ENCODE measurements at regions of chr7 and their contacts with region 1.

Region 1: GRCh38 chr7:45923290-45923689 is 2.2 kb upstream of the IGFBP3 start:
- DNase-seq: peak; percentile 71 to 83 (median 76)
- ATAC-seq: peak in 3 of 4 donors; percentile 52 to 61 (median 59)
- H3K4me3 ChIP-seq: peak overlapping the region in 9 of 12 donors; percentile 13 to 72 (median 59)
- H3K27ac ChIP-seq: peak overlapping the region in 7 of 12 donors; percentile 14 to 75 (median 48)
- H3K4me1 ChIP-seq: peaks cover 0 to 37% (median 22%) of the 10 kb centered on the region in 12 donors
- H3K27me3 ChIP-seq: peaks cover 0 to 49% (median 0%) of the 10 kb centered on the region in 9 donors
- CTCF ChIP-seq: peak; percentile 80 to 98 (median 91)
- POLR2A ChIP-seq: no peak

Region 2: DNA sequence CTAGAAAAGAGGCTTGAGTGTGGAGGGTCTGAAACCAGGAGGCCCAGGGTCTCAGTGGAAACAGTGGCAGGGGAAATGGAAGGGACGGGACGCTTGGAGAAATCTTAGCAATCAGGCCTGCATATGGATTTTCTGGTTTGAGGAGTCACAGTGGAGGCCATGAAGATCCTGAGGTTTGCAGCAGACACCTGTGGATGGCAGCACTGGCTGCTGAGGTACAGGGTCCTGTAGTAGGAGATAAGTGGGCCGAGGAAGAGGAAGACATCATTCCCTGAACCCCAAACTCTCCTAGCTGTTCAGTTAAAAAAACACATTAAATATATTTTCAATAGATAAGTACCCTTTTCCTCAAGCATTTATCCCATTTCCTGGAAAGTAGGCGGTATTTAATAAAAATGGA is 206.5 kb after region 1 on chr7:
- intact Hi-C with region 1: loop called in 1 of 10 experiments (anchors 10 kb)
- DNase-seq: no peak
- ATAC-seq: no peak
- H3K4me3 ChIP-seq: no peak overlapping the region
- H3K27ac ChIP-seq: no peak overlapping the region
- H3K4me1 ChIP-seq: peaks cover 0 to 9% (median 0%) of the 10 kb centered on the region in 12 donors
- H3K27me3 ChIP-seq: no peaks in the 10 kb centered on the region
- CTCF ChIP-seq: peak in 2 of 12 donors; percentile 41 to 46
- POLR2A ChIP-seq: no peak

Region 3: GRCh38 chr7:46603780-46604179 is 680.5 kb after region 1 on chr7:
- intact Hi-C with region 1: loop called in 1 of 10 experiments (anchors 10 kb)
- DNase-seq: peak; percentile 79 to 96 (median 91)
- ATAC-seq: peak; percentile 96 to 97 (median 96)
- H3K4me3 ChIP-seq: peak overlapping the region in 1 of 12 donors; percentile 14
- H3K27ac ChIP-seq: peak overlapping the region; percentile 61 to 89 (median 82)
- H3K4me1 ChIP-seq: peaks cover 3 to 38% (median 24%) of the 10 kb centered on the region in 12 donors
- H3K27me3 ChIP-seq: no peaks in the 10 kb centered on the region
- CTCF ChIP-seq: no peak
- POLR2A ChIP-seq: no peak

Region 4: GRCh38 chr7:46809881-46810280 is 886.6 kb after region 1 on chr7:
- intact Hi-C with region 1: loop called in 1 of 10 experiments (anchors 10 kb)
- DNase-seq: peak in 1 of 5 donors; percentile 29
- ATAC-seq: no peak
- H3K4me3 ChIP-seq: no peak overlapping the region
- H3K27ac ChIP-seq: no peak overlapping the region
- H3K4me1 ChIP-seq: peaks cover 0 to 27% (median 12%) of the 10 kb centered on the region in 12 donors
- H3K27me3 ChIP-seq: no peaks in the 10 kb centered on the region
- CTCF ChIP-seq: no peak
- POLR2A ChIP-seq: no peak

Region 5: DNA sequence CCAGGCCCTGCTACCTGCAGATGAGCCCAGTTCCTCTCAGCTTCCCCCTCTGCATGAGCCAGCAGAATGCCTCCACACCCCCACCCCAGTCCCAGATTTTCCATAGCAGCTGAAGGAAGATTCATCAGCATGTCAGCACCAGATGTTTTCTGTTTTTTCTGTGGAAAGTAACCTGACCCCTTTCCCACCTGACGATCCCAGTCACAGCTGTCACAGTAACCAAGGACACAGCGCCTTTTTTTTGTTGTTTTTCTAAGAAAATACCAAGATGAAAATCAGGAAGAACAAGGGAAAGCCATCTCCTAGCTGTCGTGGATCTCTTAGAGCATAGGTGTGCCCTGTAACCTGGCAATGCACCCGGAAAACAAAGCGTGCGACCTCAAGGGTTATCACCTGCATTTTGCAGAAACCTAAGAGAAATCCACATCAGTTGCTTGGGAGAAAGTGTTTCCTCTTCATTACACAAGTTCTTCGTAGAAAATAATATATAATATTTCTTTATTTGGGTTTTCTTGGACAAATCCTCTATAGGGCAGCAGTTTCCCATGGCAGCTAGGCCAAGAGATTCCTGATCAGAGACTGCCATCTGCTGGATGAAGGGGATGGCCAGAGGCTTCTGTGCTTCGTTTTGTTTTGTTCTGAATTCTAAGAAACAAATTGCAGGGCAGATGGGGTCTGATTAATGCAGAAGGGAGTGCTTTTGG is 1256.7 kb after region 1 on chr7:
- intact Hi-C with region 1: loop called in 9 of 10 experiments (anchors 1 to 5 kb)
- DNase-seq: peak in 3 of 5 donors; percentile 43 to 51 (median 49)
- ATAC-seq: peak in 2 of 4 donors; percentile 47 to 73
- H3K4me3 ChIP-seq: no peak overlapping the region
- H3K27ac ChIP-seq: no peak overlapping the region
- H3K4me1 ChIP-seq: peaks cover 0 to 46% (median 13%) of the 10 kb centered on the region in 12 donors
- H3K27me3 ChIP-seq: no peaks in the 10 kb centered on the region
- CTCF ChIP-seq: peak; percentile 59 to 92 (median 90)
- POLR2A ChIP-seq: no peak